ENCODE measurements at regions of chr9 and their contacts with region 1.

Region 1: GRCh38 chr9:38160613-38161215 is 91.7 kb upstream of the SHB start:
- DNase-seq: peak; percentile 45 to 77
- ATAC-seq: peak in 2 of 3 donors; percentile 62 to 68
- H3K4me3 ChIP-seq: no peak overlapping the region
- H3K4me3 Mint-ChIP-seq: no peak overlapping the region
- H3K27ac ChIP-seq: no peak overlapping the region
- H3K27ac Mint-ChIP-seq: no peak overlapping the region
- H3K4me1 ChIP-seq: no peaks in the 10 kb centered on the region
- H3K4me1 Mint-ChIP-seq: peaks cover 0 to 9% of the 10 kb centered on the region in 2 donors
- H3K27me3 ChIP-seq: no peaks in the 10 kb centered on the region
- H3K27me3 Mint-ChIP-seq: peaks cover 0 to 6% of the 10 kb centered on the region in 2 donors
- CTCF ChIP-seq: peak; percentile 90

Region 2: GRCh38 chr9:37776328-37776727 is 384.4 kb before region 1 on chr9:
- intact Hi-C with region 1: no loop called
- DNase-seq: no peak
- ATAC-seq: no peak
- H3K4me3 ChIP-seq: no peak overlapping the region
- H3K4me3 Mint-ChIP-seq: no peak overlapping the region
- H3K27ac ChIP-seq: no peak overlapping the region
- H3K27ac Mint-ChIP-seq: no peak overlapping the region
- H3K4me1 ChIP-seq: no peaks in the 10 kb centered on the region
- H3K4me1 Mint-ChIP-seq: peaks cover 8 to 9% of the 10 kb centered on the region in 2 donors
- H3K27me3 ChIP-seq: no peaks in the 10 kb centered on the region
- H3K27me3 Mint-ChIP-seq: no peaks in the 10 kb centered on the region
- CTCF ChIP-seq: no peak

Region 3: GRCh38 chr9:38227061-38227540 is 66.4 kb after region 1 on chr9:
- intact Hi-C with region 1: loop called (anchors 2 kb)
- DNase-seq: peak; percentile 76 to 86
- ATAC-seq: peak; percentile 85 to 88 (median 86)
- H3K4me3 ChIP-seq: peak overlapping the region; percentile 36
- H3K4me3 Mint-ChIP-seq: peak overlapping the region; percentile 89
- H3K27ac ChIP-seq: peak overlapping the region; percentile 3
- H3K27ac Mint-ChIP-seq: peak overlapping the region; percentile 48 to 81
- H3K4me1 ChIP-seq: peaks cover 24% of the 10 kb centered on the region
- H3K4me1 Mint-ChIP-seq: peaks cover 28 to 46% of the 10 kb centered on the region in 2 donors
- H3K27me3 ChIP-seq: no peaks in the 10 kb centered on the region
- H3K27me3 Mint-ChIP-seq: no peaks in the 10 kb centered on the region
- CTCF ChIP-seq: no peak

Region 4: DNA sequence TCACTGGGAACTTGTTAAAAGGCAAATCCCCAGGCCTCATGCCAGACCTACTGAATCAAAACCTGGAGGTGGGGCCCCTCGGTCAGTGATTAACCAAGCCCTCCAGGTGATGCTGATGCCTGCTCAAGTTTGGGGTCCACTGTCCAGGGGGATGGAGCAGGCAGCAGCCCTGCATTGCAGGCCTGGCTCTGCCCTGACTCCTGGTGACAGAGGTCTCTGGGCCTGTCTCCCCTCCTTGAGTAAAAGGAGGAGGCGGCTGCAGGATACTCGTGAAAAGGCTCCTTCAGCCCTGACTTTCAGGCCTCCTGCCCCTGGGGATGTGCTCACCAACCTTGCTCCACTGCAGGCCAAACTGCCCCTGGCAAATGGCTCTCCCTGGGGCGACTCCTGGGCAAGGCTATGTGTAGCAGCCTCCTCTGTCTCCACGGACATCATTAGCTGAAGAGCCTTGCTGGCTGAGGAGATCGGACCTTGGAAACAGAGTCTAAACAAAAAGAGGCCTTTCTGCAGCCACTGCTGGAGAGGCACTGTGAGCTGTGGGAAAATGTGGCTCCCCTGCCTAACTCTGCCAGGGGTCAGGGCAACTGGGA is 97.0 kb after region 1 on chr9:
- intact Hi-C with region 1: loop called (anchors 5 kb)
- DNase-seq: no peak
- ATAC-seq: no peak
- H3K4me3 ChIP-seq: no peak overlapping the region
- H3K4me3 Mint-ChIP-seq: no peak overlapping the region
- H3K27ac ChIP-seq: no peak overlapping the region
- H3K27ac Mint-ChIP-seq: no peak overlapping the region
- H3K4me1 ChIP-seq: no peaks in the 10 kb centered on the region
- H3K4me1 Mint-ChIP-seq: no peaks in the 10 kb centered on the region
- H3K27me3 ChIP-seq: peaks cover 2% of the 10 kb centered on the region
- H3K27me3 Mint-ChIP-seq: peaks cover 2 to 10% of the 10 kb centered on the region in 2 donors
- CTCF ChIP-seq: no peak